ENCODE measurements at regions of chr1 and their contacts with region 1.

Region 1: DNA sequence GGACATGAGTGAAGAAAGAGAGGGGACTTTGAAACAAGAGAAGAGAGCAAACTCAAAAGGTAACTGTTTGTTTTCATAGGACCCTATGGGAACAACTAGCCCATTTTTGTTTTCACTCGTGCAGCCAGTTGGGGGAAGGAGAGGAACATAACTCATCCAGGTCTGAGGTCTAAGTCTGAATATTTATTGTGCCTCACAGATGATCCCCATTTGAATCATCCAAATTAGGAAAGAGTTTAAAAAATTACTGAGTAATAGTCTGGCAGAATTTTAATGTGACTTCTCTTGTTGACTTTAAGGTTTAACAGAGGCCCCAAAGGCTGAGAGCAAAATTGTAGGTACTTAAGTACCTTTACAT is 10.4 kb upstream of the TSPAN2 start:
- DNase-seq: no peak
- H3K4me3 ChIP-seq: peak overlapping the region; percentile 47
- H3K27ac ChIP-seq: peak overlapping the region; percentile 83 to 84
- H3K4me1 ChIP-seq: peaks cover 0 to 10% (median 5%) of the 10 kb centered on the region in 4 donors
- H3K27me3 ChIP-seq: no peaks in the 10 kb centered on the region
- CTCF ChIP-seq: no peak

Region 2: GRCh38 chr1:115052454-115053083 is 47.1 kb before region 1 on chr1:
- intact Hi-C with region 1: loop called (anchors 10 kb)
- DNase-seq: peak in 1 of 2 donors; percentile 57
- H3K4me3 ChIP-seq: no peak overlapping the region
- H3K27ac ChIP-seq: no peak overlapping the region
- H3K4me1 ChIP-seq: peaks cover 0 to 32% (median 5%) of the 10 kb centered on the region in 4 donors
- H3K27me3 ChIP-seq: no peaks in the 10 kb centered on the region
- CTCF ChIP-seq: peak; percentile 62 to 79

Region 3: DNA sequence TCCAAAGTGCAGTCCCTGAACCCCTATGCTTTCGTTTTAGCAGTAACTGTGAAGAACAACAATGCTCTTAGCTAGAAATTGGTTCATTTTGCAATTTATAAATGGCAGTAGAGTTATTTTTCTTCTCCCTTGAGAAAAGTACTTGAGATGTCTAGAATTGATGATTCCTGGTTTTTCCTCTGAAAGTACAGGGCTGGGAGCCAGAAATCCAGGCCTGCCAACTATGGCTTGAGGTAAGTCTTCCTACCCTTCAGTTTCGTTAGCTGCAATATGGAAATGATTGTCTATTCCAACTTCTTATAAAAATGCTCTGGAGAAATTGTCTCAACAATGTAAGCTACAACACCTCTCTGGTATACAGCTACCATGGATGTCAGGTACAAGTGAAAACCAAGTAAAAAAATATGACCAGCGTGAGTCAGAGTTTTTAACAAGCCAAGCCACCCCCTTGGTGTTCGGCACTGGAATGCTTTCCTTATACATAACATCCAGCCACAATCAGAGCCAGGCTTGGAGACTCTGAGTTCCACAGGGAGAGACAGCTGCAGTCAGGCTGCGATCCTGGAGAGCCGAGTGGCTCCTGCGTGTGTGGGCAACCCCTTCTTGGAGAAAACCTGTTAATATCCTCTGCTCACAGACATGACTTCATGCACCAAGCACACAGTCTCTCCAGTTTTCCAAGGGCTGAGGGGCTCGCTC is 32.4 kb before region 1 on chr1:
- intact Hi-C with region 1: no loop called
- DNase-seq: no peak
- H3K4me3 ChIP-seq: peak overlapping the region; percentile 7 to 10
- H3K27ac ChIP-seq: peak overlapping the region; percentile 80 to 84
- H3K4me1 ChIP-seq: peaks cover 5 to 74% (median 36%) of the 10 kb centered on the region in 4 donors
- H3K27me3 ChIP-seq: no peaks in the 10 kb centered on the region
- CTCF ChIP-seq: no peak

Measured in tibial artery (tissue), 4 donors.